ENCODE measurements at regions of chr1 and their contacts with region 1.

Region 1: DNA sequence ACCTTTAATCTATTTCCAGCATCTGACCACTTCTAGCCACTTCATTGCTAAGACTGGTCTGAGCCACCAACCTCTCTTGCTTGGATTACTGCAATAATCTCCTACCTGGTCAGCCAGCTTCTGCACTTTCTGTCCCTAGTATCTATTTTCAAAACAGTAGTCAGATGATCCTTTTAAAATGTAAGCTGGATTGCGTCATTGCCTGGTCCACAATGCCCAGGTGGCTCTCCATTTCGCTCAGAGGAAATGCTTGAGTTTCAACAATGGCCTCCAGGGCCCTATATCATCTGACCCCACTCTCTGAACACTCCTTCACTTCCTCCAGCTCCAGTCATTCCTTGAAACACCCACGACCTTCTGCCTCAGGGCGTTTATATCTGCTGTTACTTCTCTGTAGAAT is 2.3 kb downstream of the FYB2 start:
- DNase-seq: no peak
- ATAC-seq: no peak
- H3K4me3 ChIP-seq: no peak overlapping the region
- H3K27ac ChIP-seq: no peak overlapping the region
- H3K4me1 ChIP-seq: peaks cover 4% of the 10 kb centered on the region; the same call in 1 of the 2 replicates
- H3K27me3 ChIP-seq: peaks cover 8% of the 10 kb centered on the region
- CTCF ChIP-seq: no peak

Region 2: GRCh38 chr1:56897150-56898004 is 80.5 kb after region 1 on chr1:
- CTCF ChIA-PET with region 1: interaction called, 10 read pairs
- POLR2A ChIA-PET with region 1: no interaction called
- in situ Hi-C with region 1: no loop called
- intact Hi-C with region 1: no loop called
- DNase-seq: no peak
- ATAC-seq: no peak
- H3K4me3 ChIP-seq: no peak overlapping the region
- H3K27ac ChIP-seq: no peak overlapping the region
- H3K4me1 ChIP-seq: no peaks in the 10 kb centered on the region
- H3K27me3 ChIP-seq: no peaks in the 10 kb centered on the region; the same call in 1 of the 2 replicates
- CTCF ChIP-seq: no peak

Measured in Panc1 (cell line).